Activated B cell treated with CpG ODN at 0.5 μM for 24 hours (primary cell): ENCODE measurements at regions of chr2 and their contacts with region 1.

Region 1: DNA sequence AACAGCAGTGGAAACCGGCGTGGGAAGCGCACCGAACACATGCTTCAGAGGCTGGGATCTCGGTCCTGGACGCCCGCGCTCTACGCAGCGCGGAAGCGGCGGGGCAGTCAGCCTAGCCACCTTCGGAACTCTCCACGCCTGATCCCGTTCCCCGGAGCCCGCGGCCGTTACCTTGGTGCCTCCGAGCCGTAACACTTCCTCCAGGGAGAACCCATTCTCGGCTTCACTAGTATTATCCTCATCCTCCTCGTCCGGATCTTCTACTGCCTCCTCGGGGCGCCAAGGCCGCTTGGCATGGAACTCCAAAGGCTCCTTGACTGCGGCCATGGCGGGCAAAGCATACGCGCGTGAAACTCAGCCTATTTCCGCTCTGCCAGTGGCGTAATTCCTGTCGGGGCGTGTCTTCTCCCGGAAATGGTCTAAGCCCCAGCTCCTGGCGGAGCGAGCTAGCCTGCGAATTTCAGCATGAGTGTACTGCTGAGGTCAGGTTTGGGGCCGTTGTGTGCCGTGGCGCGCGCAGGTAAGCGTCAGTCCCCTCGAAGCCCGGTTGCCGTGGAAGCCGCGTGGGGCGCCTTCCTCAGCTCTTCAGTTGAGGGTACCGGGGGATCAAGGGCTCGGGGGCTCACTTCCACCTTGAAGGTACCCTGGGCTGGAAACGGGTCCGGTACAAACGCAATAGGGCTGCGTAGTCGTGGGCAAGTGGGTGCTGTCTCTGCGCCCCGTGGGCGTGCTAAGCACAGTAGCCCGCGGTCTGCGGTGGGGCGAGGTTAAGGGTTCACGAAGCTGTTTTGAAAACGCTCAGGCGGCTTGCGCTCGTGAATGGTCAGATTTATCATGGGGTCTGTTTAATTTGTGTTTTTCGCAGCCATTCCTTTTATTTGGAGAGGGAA is at the starts of genes CEBPZ and NDUFAF7:
- DNase-seq: peak; percentile 80
- ATAC-seq: peak; percentile 91
- H3K4me3 Mint-ChIP-seq: no peak within 1 kb of the TSS
- H3K27ac Mint-ChIP-seq: no peak within 1 kb of the TSS
- H3K4me1 Mint-ChIP-seq: peaks cover 16% of the 10 kb centered on the region
- H3K27me3 Mint-ChIP-seq: no peaks in the 10 kb centered on the region
- CTCF ChIP-seq: no peak
- total RNA-seq, gene CEBPZ: 55.2 and 57.0 TPM in 2 replicates
- total RNA-seq, gene NDUFAF7: 22.4 and 22.8 TPM in 2 replicates

Region 2: GRCh38 chr2:36486546-36487044 is 744.9 kb before region 1 on chr2:
- CTCF ChIA-PET with region 1: no interaction called
- POLR2A ChIA-PET with region 1: no interaction called
- intact Hi-C with region 1: no loop called
- DNase-seq: no peak
- ATAC-seq: no peak
- H3K4me3 Mint-ChIP-seq: no peak overlapping the region
- H3K27ac Mint-ChIP-seq: no peak overlapping the region
- H3K4me1 Mint-ChIP-seq: no peaks in the 10 kb centered on the region
- H3K27me3 Mint-ChIP-seq: no peaks in the 10 kb centered on the region
- CTCF ChIP-seq: no peak

Region 3: DNA sequence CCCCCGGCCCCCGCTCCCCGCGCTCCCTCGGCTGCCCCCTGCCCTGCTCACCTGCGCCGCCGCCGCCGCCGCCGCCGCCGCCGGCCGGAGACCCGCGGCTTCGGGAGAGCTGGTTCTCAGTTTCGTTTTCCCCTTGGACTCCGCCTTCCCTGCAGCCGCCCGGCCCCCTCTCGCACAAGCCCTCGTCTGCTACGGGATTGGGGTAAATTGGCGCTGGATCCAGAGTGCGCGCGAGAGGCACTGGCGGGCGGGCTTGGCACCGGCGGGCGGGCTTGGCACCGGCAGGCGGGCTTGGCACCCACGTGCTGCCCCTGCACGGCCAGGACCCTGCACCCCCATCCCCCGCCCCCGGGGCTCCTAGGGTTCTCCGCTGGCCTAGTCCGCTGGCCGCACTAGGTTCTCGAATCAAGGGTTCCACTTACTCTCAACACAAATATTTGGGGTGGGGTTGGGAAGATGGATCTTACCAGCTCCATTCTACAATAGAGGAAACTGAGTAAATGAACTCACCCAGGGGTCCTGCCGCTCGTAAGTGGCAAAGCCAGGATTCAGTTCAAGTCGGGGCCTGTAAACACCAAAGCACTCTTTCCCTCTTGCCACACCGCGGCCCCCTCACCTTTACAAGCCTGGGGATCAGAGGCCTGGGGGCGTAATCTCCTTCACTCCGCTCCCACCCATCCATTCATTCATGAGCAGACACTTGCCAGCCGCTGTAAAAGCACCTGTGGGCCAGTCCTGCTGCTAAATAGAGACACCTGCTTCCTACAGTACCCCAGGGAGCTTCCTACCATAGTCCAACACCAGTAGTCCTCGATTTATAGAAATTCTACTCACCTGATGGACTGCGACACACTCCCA is 74.4 kb before region 1 on chr2 and contains the start of gene EIF2AK2:
- CTCF ChIA-PET with region 1: no interaction called
- POLR2A ChIA-PET with region 1: interaction called, 4 read pairs
- intact Hi-C with region 1: loop called (anchors 2 kb)
- DNase-seq: peak; percentile 70
- ATAC-seq: peak; percentile 92
- H3K4me3 Mint-ChIP-seq: peak within 1 kb of the TSS; percentile 89
- H3K27ac Mint-ChIP-seq: peak within 1 kb of the TSS; percentile 86
- H3K4me1 Mint-ChIP-seq: peaks cover 40% of the 10 kb centered on the region
- H3K27me3 Mint-ChIP-seq: no peaks in the 10 kb centered on the region
- CTCF ChIP-seq: no peak
- total RNA-seq, gene EIF2AK2: 37.0 and 39.9 TPM in 2 replicates

Region 4: DNA sequence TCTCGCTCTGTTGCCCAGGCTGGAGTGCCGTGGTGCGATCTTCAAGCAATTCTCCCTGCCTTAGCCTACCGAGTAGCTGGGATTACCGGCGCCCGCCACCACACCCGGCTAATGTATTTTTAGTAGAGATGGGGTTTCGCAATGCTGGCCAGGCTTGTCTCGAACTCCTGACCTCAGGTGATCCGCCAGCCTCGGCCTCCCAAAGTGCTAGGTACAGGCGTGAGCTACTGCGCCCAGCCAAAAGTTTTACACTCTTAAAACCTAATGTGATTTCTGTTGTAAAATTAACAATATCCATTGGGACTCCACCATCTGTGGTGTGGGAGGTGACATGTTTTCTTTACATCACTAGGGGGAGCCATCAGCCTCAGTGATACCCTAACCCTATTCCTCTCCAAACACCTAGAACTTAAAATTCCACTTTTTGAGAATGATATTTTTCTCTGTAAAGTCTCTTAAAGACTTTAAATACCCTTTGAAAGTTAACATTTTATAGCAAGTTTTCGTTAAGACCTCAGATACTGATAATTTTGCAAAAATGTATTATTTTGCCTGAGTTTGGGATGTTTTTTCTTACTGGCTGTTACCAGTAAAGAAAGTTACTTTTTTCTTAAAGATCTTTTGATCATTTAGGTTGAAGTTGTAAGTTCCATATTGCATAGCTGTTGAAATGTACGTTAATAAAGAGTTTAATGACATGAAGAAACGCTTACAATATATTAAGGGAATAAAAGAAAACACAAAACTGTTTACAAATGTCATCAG is 63.1 kb before region 1 on chr2:
- CTCF ChIA-PET with region 1: no interaction called
- POLR2A ChIA-PET with region 1: no interaction called
- intact Hi-C with region 1: loop called (anchors 1 kb)
- DNase-seq: no peak
- ATAC-seq: peak; percentile 86
- H3K4me3 Mint-ChIP-seq: no peak overlapping the region
- H3K27ac Mint-ChIP-seq: no peak overlapping the region
- H3K4me1 Mint-ChIP-seq: no peaks in the 10 kb centered on the region
- H3K27me3 Mint-ChIP-seq: no peaks in the 10 kb centered on the region
- CTCF ChIP-seq: no peak

Region 5: GRCh38 chr2:37196320-37197195 is 34.9 kb before region 1 on chr2 and contains the start of gene CEBPZOS:
- CTCF ChIA-PET with region 1: no interaction called
- POLR2A ChIA-PET with region 1: interaction called, 5 read pairs
- intact Hi-C with region 1: loop called (anchors 1 kb)
- DNase-seq: peak; percentile 87
- ATAC-seq: peak; percentile 90
- H3K4me3 Mint-ChIP-seq: peak within 1 kb of the TSS; percentile 99
- H3K27ac Mint-ChIP-seq: peak within 1 kb of the TSS; percentile 98
- H3K4me1 Mint-ChIP-seq: peaks cover 23% of the 10 kb centered on the region
- H3K27me3 Mint-ChIP-seq: no peaks in the 10 kb centered on the region
- CTCF ChIP-seq: no peak
- total RNA-seq, gene CEBPZOS: 29.2 and 35.5 TPM in 2 replicates

Region 6: DNA sequence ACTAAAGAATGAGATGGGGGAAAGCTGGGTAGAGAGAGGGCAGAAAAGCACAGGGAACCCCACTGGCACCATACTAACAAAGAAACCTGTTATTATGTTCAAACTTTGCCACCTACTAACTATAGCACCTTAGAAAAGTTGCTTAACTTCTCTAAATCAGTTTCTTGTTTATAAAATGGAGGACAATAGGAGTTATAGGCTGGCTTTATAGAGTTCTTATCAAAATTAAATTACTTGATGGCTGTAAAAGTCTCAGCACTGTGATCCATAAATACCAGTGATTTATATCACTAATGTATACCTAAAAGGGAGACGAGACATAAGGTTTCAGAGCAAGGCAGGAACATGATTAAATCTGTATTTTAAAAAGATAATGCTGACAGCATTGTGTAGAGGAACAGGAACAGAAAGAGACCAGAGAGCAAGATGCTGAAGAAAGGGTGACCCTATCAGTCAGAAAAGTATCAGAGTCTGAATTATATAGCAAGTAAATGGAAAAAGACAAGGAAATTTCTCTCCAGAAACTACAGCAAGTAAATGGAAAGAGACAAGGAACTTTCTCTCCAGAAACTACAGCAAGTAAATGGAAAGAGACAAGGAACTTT is 64.1 kb after region 1 on chr2:
- CTCF ChIA-PET with region 1: no interaction called
- POLR2A ChIA-PET with region 1: no interaction called
- intact Hi-C with region 1: no loop called
- DNase-seq: no peak
- ATAC-seq: peak; percentile 34
- H3K4me3 Mint-ChIP-seq: no peak overlapping the region
- H3K27ac Mint-ChIP-seq: peak overlapping the region; percentile 39
- H3K4me1 Mint-ChIP-seq: peaks cover 48% of the 10 kb centered on the region
- H3K27me3 Mint-ChIP-seq: no peaks in the 10 kb centered on the region
- CTCF ChIP-seq: no peak

Region 7: DNA sequence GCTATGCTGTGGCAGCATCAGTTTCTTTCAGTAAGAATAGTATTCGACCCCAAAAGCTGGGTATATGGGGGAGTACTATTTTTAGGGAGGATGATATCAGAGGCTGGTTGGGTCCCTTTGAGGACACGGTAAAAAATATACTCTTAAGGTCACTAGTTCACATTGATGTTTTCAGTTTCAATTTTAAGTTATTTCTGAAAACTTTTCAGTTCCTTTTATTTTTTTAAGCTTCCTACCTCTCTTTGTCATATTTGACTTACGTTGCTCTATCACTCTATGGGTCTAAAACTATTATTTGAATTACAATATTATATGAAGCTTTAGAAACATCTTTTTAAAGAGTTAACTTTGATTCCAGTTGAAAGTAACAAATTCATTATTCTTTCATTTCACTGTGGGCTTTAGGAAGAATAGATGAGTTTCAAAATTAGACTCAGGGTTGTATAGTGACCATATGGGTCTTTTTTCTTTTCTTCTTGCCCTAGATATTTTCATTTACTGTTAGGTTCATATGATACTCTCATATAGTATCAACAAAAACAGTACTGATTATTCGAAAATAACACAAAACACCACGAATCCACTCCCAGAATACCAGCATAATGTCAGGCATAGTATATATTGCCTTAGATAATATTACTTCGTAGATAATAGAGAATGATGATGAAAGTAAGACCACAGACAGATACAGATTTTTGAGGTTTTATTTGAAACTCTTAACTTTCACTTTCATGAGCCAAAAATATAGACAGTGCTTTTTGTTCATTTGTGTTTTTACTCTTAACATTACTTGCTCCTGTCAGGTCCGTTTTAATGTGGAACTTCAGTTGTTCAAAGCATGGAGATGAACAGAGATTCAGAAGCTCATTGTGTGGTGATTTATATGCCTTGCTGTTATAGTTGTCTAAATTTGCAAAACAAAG is 703.4 kb after region 1 on chr2:
- CTCF ChIA-PET with region 1: no interaction called
- POLR2A ChIA-PET with region 1: no interaction called
- intact Hi-C with region 1: loop called (anchors 1 kb)
- DNase-seq: no peak
- ATAC-seq: peak; percentile 81
- H3K4me3 Mint-ChIP-seq: peak overlapping the region; percentile 74
- H3K27ac Mint-ChIP-seq: peak overlapping the region; percentile 87
- H3K4me1 Mint-ChIP-seq: peaks cover 77% of the 10 kb centered on the region
- H3K27me3 Mint-ChIP-seq: no peaks in the 10 kb centered on the region
- CTCF ChIP-seq: no peak